K562 (cell line): ENCODE measurements at regions of chr1 and their contacts with region 1.

Region 1: GRCh38 chr1:117758444-117759316 is 152.8 kb downstream of the TENT5C start:
- DNase-seq: peak; percentile 80 to 88 (median 84)
- ATAC-seq: peak; percentile 98
- H3K4me3 ChIP-seq: no peak overlapping the region; the same call in 1 of the 2 replicates
- H3K27ac ChIP-seq: no peak overlapping the region
- H3K4me1 ChIP-seq: peaks cover 2 to 10% of the 10 kb centered on the region in 2 experiments; a peak in 3 of 5 replicates
- H3K27me3 ChIP-seq: no peaks in the 10 kb centered on the region; a peak in 1 of 5 replicates
- CTCF ChIP-seq: peak; percentile 85 to 93 (median 90)
- EP300 ChIP-seq: no peak
- POLR2A ChIP-seq: no peak
- RAD21 ChIP-seq: peak; percentile 77 to 92

Region 2: DNA sequence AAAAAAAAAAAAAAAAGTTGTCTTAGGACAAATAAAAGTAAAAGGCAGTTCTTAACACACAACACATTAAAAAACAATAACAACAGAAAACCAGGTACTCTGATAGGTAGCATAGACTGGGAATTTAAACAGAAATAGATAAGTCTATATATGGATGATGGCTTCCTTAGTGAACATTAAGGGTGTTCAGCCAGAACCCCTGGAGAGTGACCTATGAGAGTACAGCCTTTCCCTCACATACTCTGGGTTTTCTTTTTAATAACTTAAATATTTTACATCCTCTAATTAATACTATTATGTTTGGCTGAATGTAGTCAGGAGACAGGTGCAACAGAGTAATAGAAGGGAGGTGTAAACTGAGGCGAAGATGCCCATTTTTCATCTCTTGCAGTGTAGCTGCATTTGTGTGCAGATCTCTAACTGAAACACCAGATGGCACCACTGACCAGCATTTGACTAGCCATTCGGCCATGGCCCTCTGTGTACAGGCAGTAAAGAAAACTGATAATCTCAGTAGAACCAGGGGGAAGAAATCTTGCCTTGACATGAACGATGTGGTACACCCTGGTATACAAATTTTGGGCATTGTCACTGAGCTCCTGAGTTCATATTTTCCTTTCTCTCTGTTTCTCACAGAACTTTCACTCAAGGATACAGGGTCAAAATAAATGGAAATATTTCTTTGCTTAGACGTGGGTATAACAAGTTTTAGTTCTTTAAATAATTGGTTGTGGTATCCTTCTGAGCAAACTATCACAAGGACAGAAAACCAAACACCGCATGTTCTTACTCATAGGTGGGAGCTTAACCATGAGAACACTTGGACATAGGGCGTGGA is 690.9 kb before region 1 on chr1:
- CTCF ChIA-PET with region 1: interaction called, 3 read pairs
- POLR2A ChIA-PET with region 1: no interaction called
- in situ Hi-C with region 1: no loop called
- intact Hi-C with region 1: loop called (anchors 5 kb)
- DNase-seq: peak; percentile 47 to 76 (median 61)
- ATAC-seq: peak; percentile 96
- H3K4me3 ChIP-seq: no peak overlapping the region
- H3K27ac ChIP-seq: no peak overlapping the region
- H3K4me1 ChIP-seq: no peaks in the 10 kb centered on the region; a peak in 1 of 5 replicates
- H3K27me3 ChIP-seq: no peaks in the 10 kb centered on the region
- CTCF ChIP-seq: peak; percentile 79 to 90 (median 88)
- EP300 ChIP-seq: no peak
- POLR2A ChIP-seq: no peak
- RAD21 ChIP-seq: peak; percentile 95

Region 3: DNA sequence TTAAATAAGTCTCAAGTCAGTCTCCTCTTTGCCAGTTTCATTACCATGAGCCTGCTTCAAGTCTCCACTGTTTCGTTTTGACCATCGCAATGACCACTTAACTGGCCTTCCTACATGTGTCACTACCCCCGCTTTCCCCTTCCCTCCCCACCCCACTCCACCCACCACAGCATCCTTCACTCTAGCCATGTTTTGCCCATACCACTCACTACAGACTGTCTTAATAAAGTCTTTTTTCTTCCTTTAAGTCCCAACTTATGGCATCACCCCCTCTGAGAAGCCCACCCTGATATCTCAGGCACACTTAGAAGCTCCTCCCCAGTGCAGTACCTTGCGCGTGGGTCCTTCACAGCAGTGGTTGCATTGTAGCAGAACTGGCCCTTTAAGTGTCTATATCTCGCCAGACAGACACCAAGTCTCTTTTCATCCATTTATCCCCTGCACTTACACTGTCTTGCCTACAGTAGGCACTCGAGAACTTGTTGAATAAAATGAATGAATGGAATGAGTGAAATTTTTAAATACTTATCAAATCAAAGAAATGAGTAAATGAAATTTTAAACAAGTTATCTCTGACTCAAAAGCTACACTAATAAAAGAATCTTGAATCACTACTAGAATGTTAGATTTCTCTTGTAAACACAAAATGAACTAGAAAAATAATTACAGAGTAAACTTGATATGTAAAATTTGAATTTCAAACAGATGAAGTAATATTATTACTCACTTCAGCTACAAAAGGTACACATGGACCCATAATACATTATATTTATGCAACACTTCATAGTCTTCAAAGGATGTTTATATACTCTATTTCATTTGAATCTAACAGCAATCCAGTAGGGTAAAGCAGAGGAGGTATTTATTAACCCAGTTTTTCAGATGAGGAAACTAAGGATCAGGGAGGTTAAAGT is 446.2 kb before region 1 on chr1:
- CTCF ChIA-PET with region 1: no interaction called
- POLR2A ChIA-PET with region 1: no interaction called
- in situ Hi-C with region 1: no loop called
- intact Hi-C with region 1: loop called (anchors 10 kb)
- DNase-seq: peak; percentile 28 to 54 (median 44)
- ATAC-seq: peak; percentile 95
- H3K4me3 ChIP-seq: no peak overlapping the region
- H3K27ac ChIP-seq: no peak overlapping the region
- H3K4me1 ChIP-seq: no peaks in the 10 kb centered on the region
- H3K27me3 ChIP-seq: peaks cover 21 to 23% of the 10 kb centered on the region in 2 experiments; a peak in 4 of 5 replicates
- CTCF ChIP-seq: peak; percentile 53 to 79 (median 72); a peak in 5 of 6 replicates
- EP300 ChIP-seq: no peak
- POLR2A ChIP-seq: no peak
- RAD21 ChIP-seq: peak; percentile 50 to 72

Region 4: GRCh38 chr1:117512743-117513321 is 245.8 kb before region 1 on chr1:
- CTCF ChIA-PET with region 1: interaction called, 16 read pairs
- POLR2A ChIA-PET with region 1: no interaction called
- in situ Hi-C with region 1: no loop called
- intact Hi-C with region 1: loop called (anchors 1 kb)
- DNase-seq: peak; percentile 22 to 32 (median 26)
- ATAC-seq: peak; percentile 62; the same call in 2 of the 3 replicates
- H3K4me3 ChIP-seq: no peak overlapping the region
- H3K27ac ChIP-seq: no peak overlapping the region
- H3K4me1 ChIP-seq: no peaks in the 10 kb centered on the region
- H3K27me3 ChIP-seq: no peaks in the 10 kb centered on the region
- CTCF ChIP-seq: peak; percentile 43 to 90 (median 49); a peak in 4 of 6 replicates
- EP300 ChIP-seq: no peak
- POLR2A ChIP-seq: no peak
- RAD21 ChIP-seq: peak; percentile 90 to 94

Region 5: GRCh38 chr1:117534995-117535467 is 223.6 kb before region 1 on chr1:
- CTCF ChIA-PET with region 1: interaction called, 15 read pairs
- POLR2A ChIA-PET with region 1: interaction called, 3 read pairs
- in situ Hi-C with region 1: no loop called
- intact Hi-C with region 1: loop called (anchors 2 kb)
- DNase-seq: peak; percentile 75 to 84 (median 80)
- ATAC-seq: peak; percentile 95
- H3K4me3 ChIP-seq: no peak overlapping the region
- H3K27ac ChIP-seq: no peak overlapping the region
- H3K4me1 ChIP-seq: 0 out of 5 replicates have a peak, but pooled peaks cover 0 to 4% of the 10 kb centered on the region in 2 experiments
- H3K27me3 ChIP-seq: no peaks in the 10 kb centered on the region
- CTCF ChIP-seq: peak; percentile 80 to 88 (median 88)
- EP300 ChIP-seq: no peak
- POLR2A ChIP-seq: no peak
- RAD21 ChIP-seq: peak; percentile 82 to 94

Region 6: DNA sequence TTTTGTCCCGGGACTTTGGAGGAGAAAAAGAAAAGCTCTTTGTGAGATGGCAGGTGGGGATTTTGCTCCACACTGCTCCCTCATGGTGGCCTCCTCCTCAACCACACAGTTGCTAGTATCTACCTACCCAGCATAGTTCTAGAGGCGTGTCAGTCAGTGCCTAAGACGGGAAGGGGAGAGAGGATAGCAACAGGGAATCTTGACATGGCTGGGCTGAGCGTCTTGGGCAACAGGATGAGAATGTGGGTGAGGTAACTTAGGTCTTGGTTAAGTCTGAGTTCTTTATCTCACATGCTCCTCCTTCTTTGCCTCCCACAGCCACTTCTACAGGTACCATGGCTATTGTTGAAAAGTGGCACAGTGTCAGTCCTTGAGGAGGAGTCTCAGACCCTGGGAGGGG is 77.5 kb before region 1 on chr1:
- CTCF ChIA-PET with region 1: no interaction called
- POLR2A ChIA-PET with region 1: no interaction called
- in situ Hi-C with region 1: no loop called
- intact Hi-C with region 1: no loop called
- DNase-seq: peak in 2 of 4 experiments; percentile 44 to 47
- ATAC-seq: peak; percentile 82
- H3K4me3 ChIP-seq: no peak overlapping the region
- H3K27ac ChIP-seq: no peak overlapping the region
- H3K4me1 ChIP-seq: no peaks in the 10 kb centered on the region; a peak in 1 of 5 replicates
- H3K27me3 ChIP-seq: no peaks in the 10 kb centered on the region; a peak in 1 of 5 replicates
- CTCF ChIP-seq: peak; percentile 35 to 49 (median 46)
- EP300 ChIP-seq: no peak
- POLR2A ChIP-seq: no peak
- RAD21 ChIP-seq: peak in 1 of 2 experiments; percentile 42; a peak in 2 of 4 replicates

Region 7: GRCh38 chr1:117710710-117711109 is 48.0 kb before region 1 on chr1:
- CTCF ChIA-PET with region 1: interaction called, 4 read pairs
- POLR2A ChIA-PET with region 1: no interaction called
- in situ Hi-C with region 1: no loop called
- intact Hi-C with region 1: loop called (anchors 1 kb)
- DNase-seq: peak in 2 of 4 experiments; percentile 41 to 51
- ATAC-seq: peak; percentile 66
- H3K4me3 ChIP-seq: no peak overlapping the region
- H3K27ac ChIP-seq: no peak overlapping the region
- H3K4me1 ChIP-seq: peaks cover 9 to 18% of the 10 kb centered on the region in 2 experiments; a peak in 3 of 5 replicates
- H3K27me3 ChIP-seq: no peaks in the 10 kb centered on the region
- CTCF ChIP-seq: peak; percentile 60 to 74 (median 67)
- EP300 ChIP-seq: no peak
- POLR2A ChIP-seq: no peak
- RAD21 ChIP-seq: peak; percentile 48 to 65

Region 8: GRCh38 chr1:117821782-117822447 is 63.2 kb after region 1 on chr1:
- CTCF ChIA-PET with region 1: no interaction called
- POLR2A ChIA-PET with region 1: no interaction called
- in situ Hi-C with region 1: no loop called
- intact Hi-C with region 1: no loop called
- DNase-seq: peak in 2 of 4 experiments; percentile 28 to 76
- ATAC-seq: peak; percentile 80
- H3K4me3 ChIP-seq: no peak overlapping the region
- H3K27ac ChIP-seq: no peak overlapping the region
- H3K4me1 ChIP-seq: peaks cover 0 to 6% of the 10 kb centered on the region in 2 experiments; a peak in 3 of 5 replicates
- H3K27me3 ChIP-seq: peaks cover 0 to 16% of the 10 kb centered on the region in 2 experiments; a peak in 2 of 5 replicates
- CTCF ChIP-seq: no peak
- EP300 ChIP-seq: 0 out of 2 replicates have a peak, but pooled peaks have one; percentile 40
- POLR2A ChIP-seq: no peak
- RAD21 ChIP-seq: no peak

Region 9: GRCh38 chr1:117895482-117896114 is 136.9 kb after region 1 on chr1:
- CTCF ChIA-PET with region 1: no interaction called
- POLR2A ChIA-PET with region 1: no interaction called
- in situ Hi-C with region 1: no loop called
- intact Hi-C with region 1: loop called (anchors 5 kb)
- DNase-seq: peak; percentile 53 to 83 (median 54)
- ATAC-seq: peak; percentile 79
- H3K4me3 ChIP-seq: no peak overlapping the region
- H3K27ac ChIP-seq: no peak overlapping the region
- H3K4me1 ChIP-seq: no peaks in the 10 kb centered on the region
- H3K27me3 ChIP-seq: no peaks in the 10 kb centered on the region
- CTCF ChIP-seq: peak; percentile 73 to 90 (median 82)
- EP300 ChIP-seq: no peak
- POLR2A ChIP-seq: no peak
- RAD21 ChIP-seq: peak; percentile 74 to 84